ENCODE measurements at regions of chr19 and their contacts with region 1.

Region 1: GRCh38 chr19:45523642-45524256 is 16.5 kb downstream of the VASP start:
- DNase-seq: peak; percentile 57
- ATAC-seq: peak; percentile 96
- H3K4me3 ChIP-seq: no peak overlapping the region
- H3K27ac ChIP-seq: no peak overlapping the region
- H3K4me1 ChIP-seq: peaks cover 10% of the 10 kb centered on the region; the same call in 1 of the 2 replicates
- H3K27me3 ChIP-seq: no peaks in the 10 kb centered on the region
- CTCF ChIP-seq: peak; percentile 82 to 98 (median 90)
- EP300 ChIP-seq: no peak
- POLR2A ChIP-seq: no peak
- RAD21 ChIP-seq: peak; percentile 67

Region 2: DNA sequence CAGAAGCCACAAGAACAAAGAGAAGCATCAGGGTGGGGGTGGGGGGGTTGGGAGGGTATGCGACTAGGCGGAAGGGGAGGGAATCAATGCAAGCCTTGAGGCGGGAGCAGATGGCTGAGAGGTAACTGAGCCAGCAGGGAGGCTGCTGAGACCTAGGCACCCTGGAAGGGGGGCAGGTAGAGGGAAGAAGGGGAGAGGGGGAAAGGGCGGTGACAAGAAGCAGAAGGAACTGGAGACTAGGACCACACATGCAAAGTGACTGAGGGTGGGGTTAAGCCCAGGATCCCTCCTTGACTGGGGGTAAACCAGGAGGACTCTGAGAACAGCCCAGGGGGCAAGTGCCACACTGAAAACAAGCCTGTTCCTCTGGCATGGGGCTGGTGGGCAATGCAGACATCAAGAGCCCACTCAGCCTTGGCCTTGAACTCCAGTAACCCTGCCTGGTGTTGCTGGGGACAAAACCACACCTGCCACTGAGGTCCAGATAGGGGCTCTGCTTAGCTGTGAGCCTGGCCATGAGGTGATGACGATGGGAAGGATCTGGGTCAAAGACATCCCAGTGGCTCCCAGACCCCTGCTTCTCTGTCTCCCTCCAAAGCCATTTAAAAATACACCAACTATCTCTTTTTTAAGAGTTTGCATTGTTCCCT is 40.5 kb after region 1 on chr19:
- CTCF ChIA-PET with region 1: interaction called, 5 read pairs
- POLR2A ChIA-PET with region 1: no interaction called
- RAD21 ChIA-PET with region 1: no interaction called
- SMC1A ChIA-PET with region 1: interaction called, 3 read pairs
- in situ Hi-C with region 1: no loop called
- intact Hi-C with region 1: loop called (anchors 5 kb)
- DNase-seq: no peak
- ATAC-seq: peak; percentile 49
- H3K4me3 ChIP-seq: no peak overlapping the region; the same call in 1 of the 2 replicates
- H3K27ac ChIP-seq: peak overlapping the region; percentile 36
- H3K4me1 ChIP-seq: peaks cover 25% of the 10 kb centered on the region
- H3K27me3 ChIP-seq: no peaks in the 10 kb centered on the region
- CTCF ChIP-seq: no peak
- EP300 ChIP-seq: no peak
- POLR2A ChIP-seq: no peak
- RAD21 ChIP-seq: no peak